MCF 10A (cell line): ENCODE measurements at regions of chr1 and their contacts with region 1.

Region 1: DNA sequence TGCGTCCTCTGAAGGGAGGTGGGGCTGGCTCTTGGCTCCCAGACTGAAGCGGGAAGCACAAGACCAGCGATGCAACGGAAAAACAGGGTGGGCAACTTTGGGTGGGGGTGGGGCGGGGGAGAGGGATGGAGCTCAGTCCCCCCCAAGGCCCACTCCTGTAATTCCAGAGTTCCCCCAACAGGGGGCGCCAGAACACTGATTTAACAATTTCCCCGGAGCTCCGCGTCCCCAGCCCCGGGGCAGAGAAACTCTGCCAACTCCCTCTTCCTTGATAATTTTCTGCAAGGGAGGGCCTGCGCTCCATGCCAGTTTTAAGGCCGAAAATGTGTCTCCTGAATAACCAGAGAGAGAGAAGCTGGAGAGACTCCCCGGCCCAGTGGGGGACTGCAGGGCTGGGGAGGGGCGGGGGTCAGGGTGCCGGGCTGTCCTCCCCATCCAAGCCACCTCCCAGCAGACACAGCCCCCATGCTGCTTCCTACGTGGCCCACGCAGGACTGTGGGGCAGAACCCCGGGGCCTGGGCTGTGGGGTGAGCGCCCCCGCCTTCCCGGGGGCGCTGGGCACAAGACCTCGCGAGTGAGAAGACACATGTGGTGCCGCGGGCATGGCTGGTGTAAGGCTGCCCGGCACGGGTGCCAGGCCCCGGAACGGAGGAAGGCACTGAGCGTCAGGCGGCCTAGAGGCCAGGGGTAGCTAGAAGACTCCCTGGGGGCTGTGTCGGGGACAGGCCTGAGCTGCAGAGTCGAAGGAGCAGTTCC is 51.4 kb downstream of the KIF21B start:
- DNase-seq: peak; percentile 80
- H3K4me3 Mint-ChIP-seq: no peak overlapping the region
- H3K27ac Mint-ChIP-seq: no peak overlapping the region
- H3K4me1 Mint-ChIP-seq: peaks cover 14% of the 10 kb centered on the region
- H3K27me3 Mint-ChIP-seq: no peaks in the 10 kb centered on the region
- CTCF ChIP-seq: peak; percentile 100

Region 2: DNA sequence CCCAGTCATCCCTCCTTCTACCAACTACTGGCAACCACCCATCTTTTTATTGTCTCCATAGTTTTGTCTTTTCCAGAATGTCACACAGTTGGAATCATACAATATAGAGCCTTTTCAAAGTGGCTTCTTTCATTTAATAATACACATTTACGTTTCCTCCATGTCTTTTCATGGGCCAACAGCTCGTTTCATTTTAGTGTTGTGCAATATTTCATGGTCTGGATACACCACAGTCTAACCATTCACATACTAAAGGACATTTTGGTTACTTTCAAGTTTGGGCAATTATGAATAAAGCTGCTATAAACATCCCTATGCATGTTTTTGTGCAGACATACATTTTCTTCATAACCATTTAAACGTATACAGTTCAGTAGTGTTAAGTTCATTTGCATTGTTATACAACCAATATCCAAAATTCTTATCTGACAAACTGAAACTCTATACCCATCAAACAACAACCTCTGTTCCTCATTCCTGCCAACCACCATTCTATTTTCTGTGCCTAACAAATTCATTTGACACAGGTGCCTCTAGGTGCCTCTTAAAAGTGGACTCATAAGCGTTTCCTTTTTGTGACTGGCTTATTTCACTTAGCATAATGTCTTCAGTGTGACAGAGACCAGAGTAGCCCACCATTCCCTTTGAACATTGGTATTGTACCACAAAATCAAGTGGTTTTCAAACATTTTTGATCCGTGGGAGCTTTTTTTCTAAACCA is 806.5 kb before region 1 on chr1:
- CTCF ChIA-PET with region 1: no interaction called
- POLR2A ChIA-PET with region 1: no interaction called
- intact Hi-C with region 1: no loop called
- DNase-seq: no peak
- H3K4me3 Mint-ChIP-seq: no peak overlapping the region
- H3K27ac Mint-ChIP-seq: no peak overlapping the region
- H3K4me1 Mint-ChIP-seq: no peaks in the 10 kb centered on the region
- H3K27me3 Mint-ChIP-seq: no peaks in the 10 kb centered on the region
- CTCF ChIP-seq: no peak

Region 3: DNA sequence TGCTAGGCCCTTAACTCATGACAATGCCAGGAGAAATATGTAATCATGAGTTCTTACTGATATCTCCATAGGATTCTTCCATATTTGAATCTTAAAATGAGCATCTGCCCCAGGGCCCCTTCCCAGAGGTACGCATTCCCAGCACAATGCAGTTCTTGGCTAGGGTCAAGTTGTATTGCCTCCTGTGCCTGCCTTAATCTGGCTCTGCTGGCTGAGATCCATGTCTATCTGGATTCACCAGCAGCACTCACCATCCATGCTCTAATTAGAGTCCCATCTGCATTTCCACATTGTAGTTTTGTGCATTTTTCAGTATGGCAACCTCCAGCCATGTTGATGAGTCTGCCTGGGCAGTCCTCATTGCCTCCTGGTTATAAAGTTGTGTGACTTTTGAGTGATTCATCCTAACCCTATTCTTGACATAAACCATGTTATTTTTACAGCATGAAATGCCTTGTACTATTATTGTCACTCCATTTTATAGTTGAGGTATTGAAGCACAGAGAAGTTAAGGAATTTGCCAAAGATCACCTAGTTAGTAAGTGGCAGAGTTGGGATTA is 177.5 kb before region 1 on chr1:
- CTCF ChIA-PET with region 1: no interaction called
- POLR2A ChIA-PET with region 1: no interaction called
- intact Hi-C with region 1: no loop called
- DNase-seq: no peak
- H3K4me3 Mint-ChIP-seq: no peak overlapping the region
- H3K27ac Mint-ChIP-seq: peak overlapping the region; percentile 1
- H3K4me1 Mint-ChIP-seq: peaks cover 30% of the 10 kb centered on the region
- H3K27me3 Mint-ChIP-seq: no peaks in the 10 kb centered on the region
- CTCF ChIP-seq: no peak

Region 4: DNA sequence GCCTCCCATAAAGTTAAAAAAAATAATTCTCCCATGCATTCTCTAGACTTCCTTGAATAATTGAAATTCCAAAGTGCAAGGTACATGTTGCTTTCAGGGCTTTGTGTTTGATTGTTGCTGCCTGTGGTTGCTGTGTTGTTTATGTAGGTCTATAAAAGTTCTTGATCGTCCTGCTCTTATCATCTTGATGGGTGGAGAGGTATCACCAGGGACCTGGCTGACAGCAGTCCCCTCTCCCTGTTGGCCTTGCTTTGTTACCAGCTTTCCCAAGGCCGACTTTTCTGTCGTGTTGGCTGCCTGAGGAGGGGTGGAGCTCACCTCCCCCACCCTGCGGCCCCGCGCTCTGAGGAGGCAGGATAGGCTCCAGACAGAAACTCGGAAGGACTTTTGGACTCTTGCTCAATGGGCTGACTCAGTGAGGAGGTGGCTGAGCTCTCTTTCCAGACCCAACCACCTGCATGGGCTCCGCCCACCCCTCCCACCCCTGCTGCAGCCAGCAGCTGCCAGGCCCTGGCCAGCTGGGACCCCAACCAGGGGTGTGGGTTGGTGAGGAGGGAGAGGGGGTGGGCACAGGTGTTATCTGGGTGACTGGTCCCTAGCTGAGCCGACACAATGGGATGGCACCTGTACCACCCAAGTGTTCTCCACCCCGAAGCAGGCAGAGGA is 75.5 kb before region 1 on chr1:
- CTCF ChIA-PET with region 1: interaction called, 26 read pairs
- POLR2A ChIA-PET with region 1: interaction called, 6 read pairs
- intact Hi-C with region 1: loop called (anchors 2 kb)
- DNase-seq: peak; percentile 99
- H3K4me3 Mint-ChIP-seq: peak overlapping the region; percentile 92
- H3K27ac Mint-ChIP-seq: peak overlapping the region; percentile 89
- H3K4me1 Mint-ChIP-seq: peaks cover 62% of the 10 kb centered on the region
- H3K27me3 Mint-ChIP-seq: no peaks in the 10 kb centered on the region
- CTCF ChIP-seq: no peak

Region 5: DNA sequence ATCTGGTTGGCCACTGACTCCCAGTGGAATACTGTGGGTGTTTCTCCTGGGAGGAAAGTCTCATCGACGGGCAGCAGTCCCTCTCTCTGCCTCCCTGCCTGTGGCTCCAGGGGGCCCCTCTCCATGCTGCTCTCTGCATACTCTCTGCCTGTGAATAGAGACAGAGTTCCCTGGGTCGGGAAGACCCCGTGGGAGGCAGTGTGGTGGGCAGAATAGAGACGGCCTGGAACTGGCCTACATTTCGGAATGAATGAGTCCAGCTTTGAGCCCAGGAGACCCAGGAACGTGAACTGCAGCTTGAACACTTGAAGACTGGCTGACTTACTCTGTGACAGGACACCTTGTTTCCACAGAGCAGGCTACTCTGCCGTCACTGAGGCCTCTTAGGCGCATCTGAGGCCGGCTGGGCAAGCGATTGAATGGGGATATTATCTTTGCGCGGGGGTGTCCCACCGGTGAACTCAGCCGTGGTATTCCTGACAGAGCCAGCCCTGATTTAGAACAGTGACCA is 12.7 kb before region 1 on chr1:
- CTCF ChIA-PET with region 1: interaction called, 80 read pairs
- POLR2A ChIA-PET with region 1: no interaction called
- intact Hi-C with region 1: no loop called
- DNase-seq: no peak
- H3K4me3 Mint-ChIP-seq: no peak overlapping the region
- H3K27ac Mint-ChIP-seq: no peak overlapping the region
- H3K4me1 Mint-ChIP-seq: peaks cover 12% of the 10 kb centered on the region
- H3K27me3 Mint-ChIP-seq: no peaks in the 10 kb centered on the region
- CTCF ChIP-seq: no peak

Region 6: DNA sequence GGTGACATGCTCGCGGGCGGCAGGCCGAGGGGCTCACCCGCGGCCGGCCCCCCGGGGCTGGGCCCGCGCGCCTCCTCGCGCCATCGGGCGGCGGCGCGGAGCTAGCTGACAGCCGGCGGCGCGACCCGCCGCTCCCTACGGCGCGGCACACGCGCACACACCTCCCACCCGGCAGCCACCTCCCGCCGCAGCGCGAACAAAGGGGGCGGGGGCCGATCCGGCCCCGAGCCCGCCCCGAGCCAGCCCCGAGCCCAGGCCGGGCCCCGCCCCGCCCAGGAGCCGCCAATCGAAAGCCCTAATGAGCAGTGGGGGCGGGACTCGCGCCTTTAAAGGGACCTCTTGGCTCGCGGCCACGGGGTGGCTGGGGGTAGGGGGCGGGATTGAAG is 51.4 kb after region 1 on chr1 and contains the start of gene KIF21B:
- CTCF ChIA-PET with region 1: interaction called, 47 read pairs
- POLR2A ChIA-PET with region 1: no interaction called
- intact Hi-C with region 1: no loop called
- DNase-seq: peak; percentile 90
- H3K4me3 Mint-ChIP-seq: peak within 1 kb of the TSS; percentile 43
- H3K27ac Mint-ChIP-seq: no peak within 1 kb of the TSS
- H3K4me1 Mint-ChIP-seq: peaks cover 22% of the 10 kb centered on the region
- H3K27me3 Mint-ChIP-seq: no peaks in the 10 kb centered on the region
- CTCF ChIP-seq: no peak
- total RNA-seq, gene KIF21B: 9.5 and 12.7 TPM in 2 replicates

Region 7: DNA sequence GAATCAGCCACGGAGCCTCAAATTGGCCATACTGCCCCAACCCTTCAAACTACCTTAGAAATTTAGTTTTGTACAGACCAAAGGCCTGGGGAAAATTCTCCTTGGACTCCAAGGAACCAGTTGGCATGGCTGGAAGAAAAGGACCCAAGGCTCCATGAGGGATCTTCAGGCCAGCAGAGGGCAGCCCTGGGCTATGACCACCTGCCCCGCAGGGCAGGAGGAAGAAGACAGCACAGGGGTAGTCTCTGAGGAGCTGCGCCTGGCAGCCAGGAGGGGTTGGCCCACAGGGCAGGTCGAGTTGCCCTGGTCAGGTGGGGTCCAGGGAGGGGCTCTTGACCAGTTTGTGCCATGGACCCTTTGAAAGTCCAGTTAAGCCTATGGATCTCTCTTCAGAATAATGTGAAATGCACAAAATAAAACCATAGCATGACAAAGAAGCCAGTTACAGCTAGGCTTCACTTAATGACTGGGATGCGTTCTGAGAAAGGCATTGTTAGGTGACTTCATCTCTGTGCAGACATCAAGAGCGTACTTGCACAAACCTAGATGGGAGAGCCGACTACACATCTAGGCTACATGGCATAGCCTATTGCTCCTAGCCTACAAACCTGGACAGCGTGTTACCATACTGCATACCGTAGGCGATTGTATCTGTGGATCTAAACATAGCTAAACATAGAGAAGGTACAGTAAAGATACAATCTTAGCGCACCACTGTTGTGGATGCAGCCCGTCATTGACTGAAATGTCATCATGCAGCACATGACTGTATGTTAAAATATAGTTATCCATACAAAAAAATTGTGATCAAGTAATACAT is 114.0 kb after region 1 on chr1:
- CTCF ChIA-PET with region 1: interaction called, 11 read pairs
- POLR2A ChIA-PET with region 1: no interaction called
- intact Hi-C with region 1: no loop called
- DNase-seq: peak; percentile 82
- H3K4me3 Mint-ChIP-seq: no peak overlapping the region
- H3K27ac Mint-ChIP-seq: no peak overlapping the region
- H3K4me1 Mint-ChIP-seq: peaks cover 7% of the 10 kb centered on the region
- H3K27me3 Mint-ChIP-seq: peaks cover 31% of the 10 kb centered on the region
- CTCF ChIP-seq: peak; percentile 95

Region 8: DNA sequence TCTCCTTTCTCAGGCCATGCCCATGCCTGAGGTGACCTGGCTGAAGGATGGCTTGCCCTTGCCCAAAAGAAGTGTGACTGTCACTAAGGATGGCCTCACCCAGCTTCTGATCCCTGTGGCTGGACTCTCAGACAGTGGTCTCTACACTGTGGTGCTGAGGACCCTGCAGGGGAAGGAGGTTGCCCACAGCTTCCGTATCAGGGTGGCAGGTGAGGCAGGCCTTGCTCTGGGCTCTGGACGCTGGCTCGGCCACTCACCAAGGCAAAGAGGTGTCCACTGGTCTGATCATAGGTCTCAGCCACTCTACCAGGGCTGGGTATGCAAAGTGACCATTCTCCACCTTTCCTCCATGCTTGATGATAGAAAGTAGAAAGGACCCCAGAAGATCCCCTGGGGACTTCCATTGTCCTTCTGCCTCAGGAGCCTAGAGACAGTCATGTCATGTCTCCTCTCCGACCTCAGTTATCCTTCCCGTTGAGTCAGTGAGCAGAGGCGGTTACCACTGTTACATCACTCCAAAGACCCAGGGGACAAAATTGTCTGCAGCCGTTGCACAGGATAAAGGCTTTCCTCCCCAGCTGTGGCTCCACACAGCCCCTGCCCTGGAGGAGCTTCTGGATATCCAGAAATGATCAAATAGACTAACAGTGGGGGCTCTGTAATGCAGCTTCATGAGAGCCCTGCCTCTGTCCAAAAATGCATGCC is 252.7 kb after region 1 on chr1:
- CTCF ChIA-PET with region 1: interaction called, 32 read pairs
- POLR2A ChIA-PET with region 1: no interaction called
- intact Hi-C with region 1: loop called (anchors 1 kb)
- DNase-seq: no peak
- H3K4me3 Mint-ChIP-seq: no peak overlapping the region
- H3K27ac Mint-ChIP-seq: no peak overlapping the region
- H3K4me1 Mint-ChIP-seq: peaks cover 1% of the 10 kb centered on the region
- H3K27me3 Mint-ChIP-seq: no peaks in the 10 kb centered on the region
- CTCF ChIP-seq: no peak

Region 9: GRCh38 chr1:201268604-201269151 is 296.5 kb after region 1 on chr1:
- CTCF ChIA-PET with region 1: no interaction called
- POLR2A ChIA-PET with region 1: no interaction called
- intact Hi-C with region 1: no loop called
- DNase-seq: peak; percentile 99
- H3K4me3 Mint-ChIP-seq: no peak overlapping the region
- H3K27ac Mint-ChIP-seq: peak overlapping the region; percentile 89
- H3K4me1 Mint-ChIP-seq: peaks cover 48% of the 10 kb centered on the region
- H3K27me3 Mint-ChIP-seq: no peaks in the 10 kb centered on the region
- CTCF ChIP-seq: no peak

Region 10: GRCh38 chr1:201299968-201300367 is 327.8 kb after region 1 on chr1:
- CTCF ChIA-PET with region 1: no interaction called
- POLR2A ChIA-PET with region 1: no interaction called
- intact Hi-C with region 1: no loop called
- DNase-seq: peak; percentile 100
- H3K4me3 Mint-ChIP-seq: no peak overlapping the region
- H3K27ac Mint-ChIP-seq: peak overlapping the region; percentile 91
- H3K4me1 Mint-ChIP-seq: peaks cover 78% of the 10 kb centered on the region
- H3K27me3 Mint-ChIP-seq: no peaks in the 10 kb centered on the region
- CTCF ChIP-seq: no peak